IMR-90 (cell line): ENCODE measurements at regions of chr14 and their contacts with region 1.

Region 1: GRCh38 chr14:103391048-103391447 is 5.8 kb downstream of the MARK3 start:
- DNase-seq: peak; percentile 87
- ATAC-seq: peak; percentile 65
- H3K4me3 ChIP-seq: no peak overlapping the region
- H3K27ac ChIP-seq: no peak overlapping the region
- H3K4me1 ChIP-seq: peaks cover 17% of the 10 kb centered on the region
- H3K27me3 ChIP-seq: no peaks in the 10 kb centered on the region
- CTCF ChIP-seq: peak; percentile 70
- POLR2A ChIP-seq: no peak
- RAD21 ChIP-seq: peak; percentile 57

Region 2: GRCh38 chr14:103343905-103344797 is 46.9 kb before region 1 on chr14:
- CTCF ChIA-PET with region 1: interaction called, 8 read pairs
- POLR2A ChIA-PET with region 1: interaction called, 5 read pairs
- dilution Hi-C with region 1: no loop called
- in situ Hi-C with region 1: no loop called
- intact Hi-C with region 1: loop called (anchors 2 kb)
- DNase-seq: no peak
- ATAC-seq: no peak
- H3K4me3 ChIP-seq: no peak overlapping the region
- H3K27ac ChIP-seq: no peak overlapping the region
- H3K4me1 ChIP-seq: no peaks in the 10 kb centered on the region; the same call in 1 of the 2 replicates
- H3K27me3 ChIP-seq: no peaks in the 10 kb centered on the region
- CTCF ChIP-seq: no peak
- POLR2A ChIP-seq: no peak
- RAD21 ChIP-seq: no peak

Region 3: DNA sequence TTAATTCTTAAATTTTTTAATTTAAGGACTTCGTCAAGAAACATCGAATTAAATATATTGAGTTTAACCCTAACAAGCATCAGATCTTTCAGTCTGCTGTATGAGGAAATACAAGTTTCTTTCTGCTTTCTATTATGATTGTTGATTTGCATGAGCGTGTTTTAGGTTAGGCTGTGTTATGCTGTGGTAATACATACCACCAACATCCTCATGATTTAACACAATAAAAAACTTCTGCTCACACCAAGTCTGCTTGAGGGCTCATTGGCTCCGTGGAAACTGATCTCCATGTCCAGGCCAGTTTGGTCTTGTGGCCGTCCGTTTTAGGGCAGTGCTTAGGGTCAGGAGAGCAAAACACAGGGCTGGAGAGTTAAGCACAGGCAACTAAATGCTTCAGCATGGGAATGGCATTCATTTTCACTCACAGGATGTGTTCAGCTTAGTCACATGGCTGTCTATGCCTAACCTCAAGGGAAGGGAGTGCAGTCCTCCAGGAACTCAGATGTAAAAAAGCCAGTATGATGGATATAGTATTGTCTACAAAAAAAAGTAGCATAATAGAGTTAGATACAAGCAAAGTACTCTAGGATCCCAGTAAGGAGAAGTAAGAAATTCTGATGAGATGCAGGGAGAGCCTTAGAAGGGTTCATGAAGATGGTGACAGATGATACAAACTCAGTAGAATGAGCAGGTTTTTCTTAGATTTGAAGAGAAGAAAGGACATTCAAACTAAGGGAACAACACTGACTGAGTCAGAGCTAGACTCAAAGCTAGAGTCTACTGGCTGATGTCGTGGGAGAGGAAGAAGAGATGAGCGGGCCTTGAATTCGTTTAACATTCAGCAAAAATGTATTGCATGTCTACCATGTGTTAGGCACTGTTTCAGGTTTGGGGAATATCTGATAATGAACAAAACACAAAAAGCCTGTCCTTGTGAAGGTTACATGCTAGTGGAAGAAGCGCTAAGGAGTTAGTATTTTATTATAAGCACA is 10.5 kb after region 1 on chr14:
- CTCF ChIA-PET with region 1: interaction called, 17 read pairs
- POLR2A ChIA-PET with region 1: no interaction called
- dilution Hi-C with region 1: no loop called
- in situ Hi-C with region 1: no loop called
- intact Hi-C with region 1: no loop called
- DNase-seq: peak; percentile 87
- ATAC-seq: peak; percentile 89
- H3K4me3 ChIP-seq: no peak overlapping the region
- H3K27ac ChIP-seq: peak overlapping the region; percentile 42; the same call in 1 of the 2 replicates
- H3K4me1 ChIP-seq: peaks cover 16% of the 10 kb centered on the region
- H3K27me3 ChIP-seq: no peaks in the 10 kb centered on the region
- CTCF ChIP-seq: no peak
- POLR2A ChIP-seq: no peak
- RAD21 ChIP-seq: no peak

Region 4: GRCh38 chr14:103423050-103423461 is 32.0 kb after region 1 on chr14:
- CTCF ChIA-PET with region 1: no interaction called
- POLR2A ChIA-PET with region 1: no interaction called
- dilution Hi-C with region 1: no loop called
- in situ Hi-C with region 1: no loop called
- intact Hi-C with region 1: no loop called
- DNase-seq: peak; percentile 77
- ATAC-seq: peak; percentile 68
- H3K4me3 ChIP-seq: no peak overlapping the region
- H3K27ac ChIP-seq: no peak overlapping the region
- H3K4me1 ChIP-seq: peaks cover 21% of the 10 kb centered on the region
- H3K27me3 ChIP-seq: no peaks in the 10 kb centered on the region
- CTCF ChIP-seq: no peak
- POLR2A ChIP-seq: no peak
- RAD21 ChIP-seq: no peak

Region 5: GRCh38 chr14:103910262-103910935 is 519.4 kb after region 1 on chr14:
- CTCF ChIA-PET with region 1: no interaction called
- POLR2A ChIA-PET with region 1: no interaction called
- dilution Hi-C with region 1: no loop called
- in situ Hi-C with region 1: no loop called
- intact Hi-C with region 1: no loop called
- DNase-seq: peak; percentile 66
- ATAC-seq: peak; percentile 93
- H3K4me3 ChIP-seq: no peak overlapping the region
- H3K27ac ChIP-seq: no peak overlapping the region
- H3K4me1 ChIP-seq: no peaks in the 10 kb centered on the region
- H3K27me3 ChIP-seq: no peaks in the 10 kb centered on the region
- CTCF ChIP-seq: peak; percentile 75
- POLR2A ChIP-seq: no peak
- RAD21 ChIP-seq: peak; percentile 77